ENCODE measurements at regions of chr2 and their contacts with region 1.

Region 1: GRCh38 chr2:223369889-223370288 is 232.3 kb downstream of the SCG2 start:
- DNase-seq: no peak
- ATAC-seq: no peak
- H3K4me3 ChIP-seq: no peak overlapping the region
- H3K27ac ChIP-seq: no peak overlapping the region
- H3K4me1 ChIP-seq: no peaks in the 10 kb centered on the region
- H3K27me3 ChIP-seq: no peaks in the 10 kb centered on the region
- CTCF ChIP-seq: no peak
- POLR2A ChIP-seq: no peak
- RAD21 ChIP-seq: no peak

Region 2: DNA sequence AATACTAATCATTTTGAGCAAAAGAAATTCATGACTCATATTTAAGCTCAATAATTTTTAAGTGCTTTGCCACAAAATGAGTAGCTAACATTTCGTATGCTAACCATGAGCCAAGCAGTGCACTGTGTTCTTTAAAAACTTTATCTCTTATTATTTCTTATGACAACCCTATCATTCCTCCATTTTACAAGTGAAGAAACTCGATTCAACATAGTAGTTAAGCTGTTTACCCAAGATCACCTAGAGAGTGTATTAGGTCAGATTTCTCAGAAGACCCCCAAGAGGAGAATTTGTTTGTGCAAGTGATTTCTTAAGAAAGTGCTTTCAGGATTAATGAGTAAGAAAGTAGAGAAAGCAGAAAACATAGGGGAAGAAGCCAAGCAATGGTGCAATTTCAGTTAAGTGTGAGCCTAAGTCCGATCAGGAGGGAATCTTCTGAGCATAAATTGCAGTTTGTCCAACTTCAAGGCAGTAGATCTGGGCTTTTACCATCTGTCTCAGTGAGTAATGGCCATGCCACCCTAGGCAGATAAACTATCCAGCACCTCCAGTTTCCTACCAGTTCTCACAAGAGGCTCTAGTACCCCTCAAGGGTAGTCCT is 29.6 kb after region 1 on chr2:
- CTCF ChIA-PET with region 1: no interaction called
- POLR2A ChIA-PET with region 1: no interaction called
- RAD21 ChIA-PET with region 1: no interaction called
- intact Hi-C with region 1: loop called (anchors 2 kb)
- DNase-seq: no peak
- ATAC-seq: no peak
- H3K4me3 ChIP-seq: no peak overlapping the region
- H3K27ac ChIP-seq: no peak overlapping the region
- H3K4me1 ChIP-seq: no peaks in the 10 kb centered on the region
- H3K27me3 ChIP-seq: no peaks in the 10 kb centered on the region
- CTCF ChIP-seq: no peak
- POLR2A ChIP-seq: no peak
- RAD21 ChIP-seq: no peak